ENCODE measurements at regions of chr3 and their contacts with region 1.

Region 1: DNA sequence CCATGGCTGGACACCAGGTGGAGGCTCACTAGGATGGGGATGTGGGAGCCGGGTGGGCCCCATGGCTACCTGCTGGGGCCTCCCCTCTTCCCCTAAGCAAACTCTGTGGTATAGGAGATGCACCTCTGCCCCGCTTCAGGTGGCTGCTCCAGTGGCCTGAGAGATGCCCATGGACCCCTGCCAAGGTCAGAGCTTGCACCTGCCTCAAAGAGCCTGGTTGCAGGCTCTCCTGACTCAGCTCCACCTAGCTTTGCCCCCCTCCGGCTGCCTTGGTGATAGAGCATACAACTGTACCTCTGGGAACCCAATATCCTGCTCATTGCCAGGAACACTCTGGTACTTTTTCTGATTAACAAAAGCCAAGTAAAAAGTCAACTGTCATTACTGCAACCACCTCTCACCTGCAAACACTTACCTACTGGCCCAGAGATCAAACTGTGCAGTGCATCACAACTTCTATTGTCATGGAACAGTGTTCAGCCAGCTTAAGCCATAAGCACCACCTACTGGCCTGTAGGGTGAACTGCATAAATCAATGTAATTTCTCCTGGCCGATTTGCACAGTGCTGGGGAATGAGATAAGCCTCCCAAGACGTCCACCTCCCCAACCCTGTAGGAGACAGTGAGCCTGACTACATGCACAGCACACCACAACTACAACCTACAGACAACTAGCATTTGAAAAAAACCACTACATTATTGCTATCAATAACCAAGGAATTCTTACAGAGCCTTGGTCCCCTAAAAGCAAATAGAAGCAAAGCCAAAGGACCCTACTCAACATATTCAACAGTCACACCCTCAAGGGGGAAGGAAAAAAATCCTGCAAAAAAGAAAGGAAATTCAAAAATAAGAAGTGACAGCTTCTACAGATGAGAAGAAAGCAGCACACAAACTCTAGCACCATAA is 352.4 kb upstream of the ARHGEF26 start:
- DNase-seq: peak; percentile 63
- H3K4me3 Mint-ChIP-seq: no peak overlapping the region
- H3K27ac Mint-ChIP-seq: no peak overlapping the region
- H3K4me1 Mint-ChIP-seq: peaks cover 1% of the 10 kb centered on the region
- H3K27me3 Mint-ChIP-seq: peaks cover 8% of the 10 kb centered on the region

Region 2: DNA sequence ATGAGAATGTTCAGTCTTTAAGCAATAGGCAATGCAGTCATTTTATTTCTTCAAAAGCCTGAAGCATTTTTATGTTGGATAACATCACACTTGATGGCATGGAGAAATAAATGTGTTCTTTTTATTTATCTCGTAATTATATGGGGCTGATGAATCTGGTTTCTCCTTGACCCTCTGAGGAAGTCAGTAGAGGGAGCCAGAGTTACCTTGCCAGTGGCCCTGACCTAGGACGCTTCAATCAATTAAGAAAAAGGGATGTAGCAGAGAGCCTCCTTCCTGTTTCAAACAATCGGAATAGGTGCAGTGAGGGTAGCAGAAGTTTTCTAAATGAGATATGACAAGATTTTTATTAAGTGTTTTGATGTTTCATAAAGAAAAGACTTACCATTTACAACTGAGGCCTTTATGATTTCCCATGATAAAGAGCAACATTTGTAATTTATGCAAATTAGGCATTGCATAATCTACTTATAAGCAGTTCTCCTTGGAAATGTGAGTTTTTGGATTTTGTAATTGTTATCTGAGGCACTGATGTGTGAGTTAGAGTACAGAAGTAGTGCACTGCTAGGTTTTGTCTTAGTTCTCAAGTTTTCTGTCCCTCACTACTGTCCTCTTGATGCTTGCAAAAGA is 477.6 kb before region 1 on chr3:
- CTCF ChIA-PET with region 1: interaction called, 4 read pairs
- intact Hi-C with region 1: loop called (anchors 1 kb)
- DNase-seq: peak; percentile 20
- H3K4me3 Mint-ChIP-seq: no peak overlapping the region
- H3K27ac Mint-ChIP-seq: peak overlapping the region; percentile 26
- H3K4me1 Mint-ChIP-seq: peaks cover 40% of the 10 kb centered on the region
- H3K27me3 Mint-ChIP-seq: no peaks in the 10 kb centered on the region

Region 3: DNA sequence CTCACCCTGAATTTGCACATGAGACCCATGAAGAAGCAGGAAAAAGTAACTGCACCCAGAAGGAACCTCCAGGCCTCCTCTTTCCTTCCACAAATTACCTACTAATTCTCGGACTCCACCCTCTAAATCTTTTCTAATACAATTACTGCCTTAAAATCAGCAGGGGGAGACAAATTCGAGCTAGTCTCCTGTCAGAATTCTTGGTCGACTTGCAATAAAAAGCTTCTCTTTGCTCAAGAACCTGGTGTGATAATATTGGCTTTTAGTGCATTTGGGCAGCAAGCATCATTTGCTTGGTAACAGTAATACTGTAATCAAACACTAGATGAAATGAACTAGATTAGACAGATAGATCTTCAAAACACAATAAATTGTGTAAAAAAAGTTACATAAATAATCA is 324.9 kb before region 1 on chr3:
- CTCF ChIA-PET with region 1: interaction called, 5 read pairs
- intact Hi-C with region 1: loop called (anchors 1 kb)
- DNase-seq: no peak
- H3K4me3 Mint-ChIP-seq: no peak overlapping the region
- H3K27ac Mint-ChIP-seq: no peak overlapping the region
- H3K4me1 Mint-ChIP-seq: peaks cover 16% of the 10 kb centered on the region
- H3K27me3 Mint-ChIP-seq: no peaks in the 10 kb centered on the region

Region 4: GRCh38 chr3:153513236-153513635 is 255.6 kb before region 1 on chr3:
- CTCF ChIA-PET with region 1: no interaction called
- intact Hi-C with region 1: loop called (anchors 1 kb)
- DNase-seq: peak; percentile 12
- H3K4me3 Mint-ChIP-seq: no peak overlapping the region
- H3K27ac Mint-ChIP-seq: no peak overlapping the region
- H3K4me1 Mint-ChIP-seq: no peaks in the 10 kb centered on the region
- H3K27me3 Mint-ChIP-seq: no peaks in the 10 kb centered on the region

Region 5: DNA sequence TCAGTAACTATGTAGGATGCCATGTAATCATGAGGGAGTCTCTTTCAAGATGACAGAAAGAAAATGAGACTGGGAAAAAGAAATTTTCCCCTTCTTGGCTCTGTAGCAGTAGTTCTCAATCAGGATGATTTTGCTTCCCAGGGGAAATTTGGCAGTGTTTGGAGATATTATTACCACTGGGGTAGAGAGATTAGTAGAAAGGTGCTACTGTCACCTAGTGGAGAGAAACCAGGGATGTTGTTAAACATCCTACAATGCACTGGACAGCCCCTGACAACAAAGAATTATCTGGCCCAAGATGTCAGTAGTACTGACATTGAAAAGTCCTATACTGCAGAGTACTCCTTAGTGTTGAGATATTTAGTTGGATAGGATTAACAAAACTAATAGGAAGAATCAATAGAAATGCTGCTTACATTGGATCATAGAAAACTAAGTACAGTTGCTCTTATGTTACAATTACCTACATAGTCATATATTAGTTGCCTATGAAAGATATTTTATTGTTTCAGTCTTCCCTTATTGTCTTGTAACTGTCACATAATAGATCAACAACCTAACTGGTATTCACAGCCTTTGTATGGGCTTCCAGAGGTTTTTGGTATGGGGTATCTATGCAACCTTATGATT is 173.5 kb before region 1 on chr3:
- CTCF ChIA-PET with region 1: interaction called, 3 read pairs
- intact Hi-C with region 1: loop called (anchors 1 kb)
- DNase-seq: no peak
- H3K4me3 Mint-ChIP-seq: no peak overlapping the region
- H3K27ac Mint-ChIP-seq: no peak overlapping the region
- H3K4me1 Mint-ChIP-seq: peaks cover 4% of the 10 kb centered on the region
- H3K27me3 Mint-ChIP-seq: no peaks in the 10 kb centered on the region

Region 6: DNA sequence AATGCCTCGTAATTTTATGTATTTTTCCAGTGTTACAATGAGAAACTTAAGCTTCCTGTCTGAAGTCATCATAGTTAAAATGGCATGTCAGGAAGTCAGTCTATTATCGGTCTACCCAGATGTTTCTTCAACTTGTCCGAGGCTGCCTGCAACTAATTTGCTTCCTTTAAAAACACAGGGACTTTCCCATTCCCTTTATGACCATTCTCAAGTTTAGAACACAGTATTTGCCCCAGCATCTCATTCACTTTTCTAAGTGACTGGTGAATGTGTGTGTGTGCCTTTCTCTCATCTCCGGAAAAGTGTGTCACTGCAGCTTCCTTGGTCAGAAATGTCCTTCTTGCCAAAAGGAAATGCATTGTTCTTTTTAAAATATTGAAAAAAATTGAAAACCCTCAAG is 140.2 kb before region 1 on chr3:
- CTCF ChIA-PET with region 1: no interaction called
- intact Hi-C with region 1: loop called (anchors 5 kb)
- DNase-seq: peak; percentile 33
- H3K4me3 Mint-ChIP-seq: no peak overlapping the region
- H3K27ac Mint-ChIP-seq: peak overlapping the region; percentile 68
- H3K4me1 Mint-ChIP-seq: peaks cover 83% of the 10 kb centered on the region
- H3K27me3 Mint-ChIP-seq: no peaks in the 10 kb centered on the region

Measured in activated naive CD4-positive, alpha-beta T cell treated with anti-CD3 and anti-CD28 coated beads for 36 hours (primary cell).